ENCODE measurements at regions of chr6 and their contacts with region 1.

Region 1: DNA sequence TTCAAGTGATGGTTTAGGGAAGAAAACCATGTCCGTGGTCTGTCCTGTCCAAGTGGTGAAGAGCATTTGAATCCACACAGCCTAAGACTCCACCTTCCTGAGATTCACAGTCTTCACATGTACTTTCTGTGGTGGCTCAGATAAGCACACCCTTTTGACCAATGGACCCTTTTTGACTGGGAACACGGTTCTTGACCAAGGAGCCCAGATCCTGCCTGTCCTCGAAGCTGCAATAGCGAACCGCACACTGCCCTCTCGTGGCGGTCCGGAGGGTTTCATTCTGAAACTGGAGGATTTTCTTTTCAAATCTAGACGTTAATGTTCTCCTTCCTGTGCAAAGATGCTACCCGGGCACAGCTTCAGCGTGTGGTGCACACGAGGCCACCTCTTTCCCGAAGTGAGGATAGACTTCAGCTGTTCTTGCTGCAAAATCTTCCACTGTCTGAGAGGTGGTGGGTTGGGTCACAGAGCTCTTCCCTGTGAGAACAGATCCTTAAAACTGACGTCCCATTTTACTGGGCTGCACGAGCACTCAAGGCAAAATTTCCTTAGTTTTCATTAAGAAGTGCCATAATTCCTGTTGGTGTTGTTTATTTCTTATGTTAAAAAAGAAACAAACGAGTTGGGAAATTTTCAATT is 90.5 kb downstream of the SYNJ2 start:
- DNase-seq: peak; percentile 58 to 72
- ATAC-seq: peak; percentile 63 to 79
- H3K4me3 ChIP-seq: no peak overlapping the region
- H3K27ac ChIP-seq: peak overlapping the region; percentile 67 to 81
- H3K4me1 ChIP-seq: peaks cover 39% of the 10 kb centered on the region
- CTCF ChIP-seq: peak; percentile 77
- EP300 ChIP-seq: no peak
- POLR2A ChIP-seq: no peak
- RAD21 ChIP-seq: peak; percentile 91 to 93

Region 2: GRCh38 chr6:157974341-157974894 is 97.8 kb before region 1 on chr6:
- CTCF ChIA-PET with region 1: interaction called, 16 read pairs
- POLR2A ChIA-PET with region 1: no interaction called
- DNase-seq: no peak
- ATAC-seq: no peak
- H3K4me3 ChIP-seq: no peak overlapping the region
- H3K27ac ChIP-seq: peak overlapping the region; percentile 50 to 51; a peak in 5 of 6 replicates
- H3K4me1 ChIP-seq: peaks cover 15% of the 10 kb centered on the region
- CTCF ChIP-seq: no peak
- EP300 ChIP-seq: no peak
- POLR2A ChIP-seq: no peak
- RAD21 ChIP-seq: no peak

Region 3: DNA sequence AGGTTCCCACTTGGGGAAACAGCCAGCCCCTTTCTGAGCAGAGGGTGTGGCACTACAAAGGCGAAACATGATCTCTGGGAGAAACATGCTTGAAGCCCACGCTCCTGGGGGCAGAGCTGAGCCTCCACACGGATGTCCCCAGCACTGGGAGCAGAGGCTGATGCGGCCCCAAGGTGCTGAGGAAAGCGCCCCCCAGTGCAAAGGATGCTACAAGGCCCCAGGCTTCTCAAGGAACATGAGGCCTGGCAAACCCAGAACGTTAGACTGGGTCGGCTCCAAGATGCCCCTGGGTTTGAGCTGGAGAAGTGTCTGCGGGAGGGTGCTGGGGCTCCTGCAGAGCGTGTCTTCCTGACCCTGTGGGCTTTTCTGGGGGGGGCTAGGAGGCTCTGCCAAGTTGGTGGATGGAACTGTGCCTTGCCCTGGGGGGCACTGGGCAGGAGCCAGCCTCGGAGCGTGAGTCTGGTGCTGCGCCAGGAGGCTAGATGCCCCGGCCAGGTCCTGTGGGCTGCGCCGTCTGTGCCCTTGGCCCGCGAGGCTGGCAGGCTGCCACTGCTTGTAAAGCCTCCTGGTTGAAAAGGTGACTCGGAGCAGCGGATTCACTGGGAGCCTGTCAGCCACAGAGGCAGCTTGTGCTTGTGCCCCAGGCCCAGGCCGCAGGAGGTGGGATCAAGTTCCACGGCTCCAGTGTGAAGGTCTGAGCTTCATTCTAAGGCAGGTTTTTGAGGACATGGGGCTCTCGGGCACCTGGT is 82.5 kb before region 1 on chr6:
- CTCF ChIA-PET with region 1: interaction called, 23 read pairs
- POLR2A ChIA-PET with region 1: no interaction called
- DNase-seq: peak in 1 of 2 experiments; percentile 50
- ATAC-seq: peak; percentile 65 to 68
- H3K4me3 ChIP-seq: 0 out of 3 replicates have a peak overlapping the region, but pooled peaks have one; percentile 11
- H3K27ac ChIP-seq: peak overlapping the region; percentile 78 to 82
- H3K4me1 ChIP-seq: peaks cover 84% of the 10 kb centered on the region
- CTCF ChIP-seq: no peak
- EP300 ChIP-seq: peak in 1 of 2 experiments; percentile 20; a peak in 1 of 5 replicates
- POLR2A ChIP-seq: no peak
- RAD21 ChIP-seq: no peak

Region 4: DNA sequence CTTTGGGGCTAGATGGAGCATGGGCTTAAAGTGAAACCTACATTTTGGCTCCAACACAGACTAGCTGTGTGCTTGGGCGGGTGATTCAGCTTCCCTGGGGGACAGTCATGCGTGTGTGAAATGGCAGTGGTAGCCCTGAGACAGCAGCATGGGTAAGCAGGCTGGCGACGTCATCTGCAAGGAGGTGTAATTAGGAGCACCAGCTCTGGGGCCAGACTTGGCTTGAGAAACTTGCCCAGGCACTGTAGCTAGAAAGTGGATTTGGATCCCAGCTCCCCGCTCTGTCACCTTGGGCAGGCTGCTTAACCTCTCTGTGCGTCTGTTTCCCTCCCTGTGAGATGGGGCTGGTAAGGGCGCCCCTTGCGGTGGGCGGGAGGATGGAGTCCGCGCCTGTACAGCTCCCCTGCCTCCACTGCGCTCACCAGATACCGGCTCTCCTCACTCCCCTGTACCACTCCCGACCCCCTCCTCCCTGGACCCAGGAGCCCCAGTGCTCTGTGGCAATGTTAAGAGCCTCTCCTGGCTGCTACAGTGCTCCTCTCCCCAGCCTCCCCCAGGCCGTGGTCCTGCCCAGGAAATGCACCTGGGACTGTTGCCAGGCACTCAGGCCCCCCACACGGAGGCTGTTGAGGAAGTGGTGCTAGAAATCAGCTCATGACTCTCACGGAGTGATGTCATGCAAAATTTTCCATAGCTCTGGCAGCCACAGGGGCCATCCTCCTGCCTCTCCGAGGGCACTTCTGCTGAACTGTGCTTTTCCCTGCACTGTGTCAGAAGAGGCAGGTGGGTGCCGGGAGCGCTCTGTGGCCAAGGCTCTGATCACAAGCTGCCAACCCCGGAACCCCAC is 45.9 kb before region 1 on chr6:
- CTCF ChIA-PET with region 1: interaction called, 54 read pairs
- POLR2A ChIA-PET with region 1: interaction called, 3 read pairs
- DNase-seq: peak; percentile 78 to 93
- ATAC-seq: peak; percentile 87 to 90
- H3K4me3 ChIP-seq: no peak overlapping the region
- H3K27ac ChIP-seq: peak overlapping the region; percentile 87 to 94
- H3K4me1 ChIP-seq: peaks cover 67% of the 10 kb centered on the region
- CTCF ChIP-seq: peak; percentile 53
- EP300 ChIP-seq: peak; percentile 68 to 77; a peak in 2 of 5 replicates
- POLR2A ChIP-seq: no peak
- RAD21 ChIP-seq: peak; percentile 32 to 49; a peak in 4 of 5 replicates

Region 5: DNA sequence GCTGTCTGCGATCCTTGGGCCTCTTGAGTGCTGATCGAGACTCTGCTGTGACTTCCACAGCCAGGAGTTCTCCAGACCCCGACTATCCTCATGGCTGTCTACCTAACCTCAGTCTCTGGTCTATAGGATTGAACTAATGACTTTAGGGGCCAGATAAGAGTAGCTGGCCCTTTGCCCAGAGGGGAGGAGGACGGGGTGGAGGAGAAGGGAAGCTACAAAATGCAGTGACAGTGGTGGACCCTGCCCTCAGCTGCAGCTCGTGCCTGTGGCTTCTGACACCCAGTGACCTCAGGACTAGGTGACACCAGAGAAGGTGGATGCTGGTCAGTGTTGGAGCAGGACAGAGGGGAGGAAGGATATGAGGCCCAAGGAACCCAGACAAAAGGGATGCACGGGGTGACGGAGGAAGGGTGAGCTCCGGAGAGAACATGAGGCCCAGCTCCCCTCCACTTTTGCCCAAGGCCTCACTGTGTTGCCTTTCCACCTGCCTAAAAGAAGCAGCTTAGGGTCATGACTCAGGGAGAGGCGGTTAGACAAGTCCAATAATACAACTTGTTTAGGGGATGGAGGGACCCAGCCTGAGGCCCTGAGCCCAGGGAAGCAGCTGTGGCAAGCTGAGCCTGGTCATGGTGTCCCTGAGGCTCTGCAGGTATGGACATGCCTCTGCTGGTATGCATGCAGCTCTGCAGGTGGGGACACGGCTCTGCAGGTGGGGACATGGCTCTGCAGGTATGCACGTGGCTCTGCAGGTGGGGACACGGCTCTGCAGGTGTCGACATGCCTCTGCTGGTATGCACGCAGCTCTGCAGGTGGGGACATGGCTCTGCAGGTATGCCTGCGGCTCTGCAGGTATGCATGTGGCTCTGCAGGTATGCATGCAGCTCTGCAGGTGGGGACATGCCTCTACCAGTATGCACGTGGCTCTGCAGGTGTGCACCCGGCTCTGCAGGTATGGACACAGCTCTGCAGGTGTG is 22.9 kb before region 1 on chr6:
- CTCF ChIA-PET with region 1: interaction called, 13 read pairs
- POLR2A ChIA-PET with region 1: no interaction called
- DNase-seq: no peak
- ATAC-seq: peak in 1 of 2 experiments; percentile 30; a peak in 1 of 6 replicates
- H3K4me3 ChIP-seq: no peak overlapping the region
- H3K27ac ChIP-seq: peak overlapping the region in 1 of 2 experiments; percentile 39; a peak in 1 of 6 replicates
- H3K4me1 ChIP-seq: peaks cover 21% of the 10 kb centered on the region
- CTCF ChIP-seq: no peak
- EP300 ChIP-seq: no peak
- POLR2A ChIP-seq: no peak
- RAD21 ChIP-seq: no peak

Region 6: DNA sequence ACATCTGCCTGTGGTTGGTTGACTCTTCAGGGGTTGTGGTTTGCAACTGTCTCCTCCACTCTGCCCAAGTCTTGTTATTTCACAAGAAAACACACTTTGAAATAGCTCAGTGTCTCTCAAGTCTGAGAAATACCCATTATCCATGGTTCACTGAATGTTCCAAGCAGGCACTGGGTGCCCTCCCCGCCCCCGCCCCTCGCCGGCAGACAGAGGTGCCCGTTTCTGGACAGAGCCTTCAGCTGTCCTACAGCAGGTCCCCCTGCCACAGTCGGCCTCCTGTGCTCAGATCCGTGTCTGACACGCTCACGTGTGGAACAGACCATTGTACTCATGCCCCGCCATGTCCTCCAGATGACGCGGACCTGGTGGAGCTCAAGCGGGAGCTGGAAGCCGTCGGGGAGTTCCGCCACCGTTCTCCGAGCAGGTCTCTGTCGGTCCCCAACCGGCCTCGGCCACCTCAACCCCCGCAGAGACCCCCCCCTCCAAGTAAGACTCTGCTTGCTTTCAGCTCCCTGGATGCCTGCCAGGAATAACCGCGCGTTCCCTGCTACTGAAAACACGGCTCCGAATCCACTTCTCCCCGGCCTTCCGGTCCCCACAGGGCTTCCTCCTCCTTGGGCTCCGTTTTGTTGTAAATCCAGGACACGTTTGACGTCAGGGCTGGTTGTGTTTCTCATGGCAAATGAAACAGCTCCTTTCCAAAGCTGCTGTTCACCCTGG is 14.5 kb after region 1 on chr6:
- CTCF ChIA-PET with region 1: interaction called, 16 read pairs
- POLR2A ChIA-PET with region 1: no interaction called
- DNase-seq: no peak
- ATAC-seq: no peak
- H3K4me3 ChIP-seq: no peak overlapping the region
- H3K27ac ChIP-seq: no peak overlapping the region
- H3K4me1 ChIP-seq: no peaks in the 10 kb centered on the region
- CTCF ChIP-seq: no peak
- EP300 ChIP-seq: no peak
- POLR2A ChIP-seq: no peak
- RAD21 ChIP-seq: no peak

Region 7: GRCh38 chr6:158631678-158632537 is 559.7 kb after region 1 on chr6:
- CTCF ChIA-PET with region 1: no interaction called
- POLR2A ChIA-PET with region 1: no interaction called
- DNase-seq: peak; percentile 51 to 80
- ATAC-seq: peak; percentile 85 to 90
- H3K4me3 ChIP-seq: no peak overlapping the region
- H3K27ac ChIP-seq: peak overlapping the region; percentile 41 to 80; a peak in 5 of 6 replicates
- H3K4me1 ChIP-seq: peaks cover 22% of the 10 kb centered on the region
- CTCF ChIP-seq: no peak
- EP300 ChIP-seq: no peak
- POLR2A ChIP-seq: no peak
- RAD21 ChIP-seq: no peak